Left ventricle myocardium superior (tissue), 1 donor: ENCODE measurements at regions of chr3 and their contacts with region 1.

Region 1: DNA sequence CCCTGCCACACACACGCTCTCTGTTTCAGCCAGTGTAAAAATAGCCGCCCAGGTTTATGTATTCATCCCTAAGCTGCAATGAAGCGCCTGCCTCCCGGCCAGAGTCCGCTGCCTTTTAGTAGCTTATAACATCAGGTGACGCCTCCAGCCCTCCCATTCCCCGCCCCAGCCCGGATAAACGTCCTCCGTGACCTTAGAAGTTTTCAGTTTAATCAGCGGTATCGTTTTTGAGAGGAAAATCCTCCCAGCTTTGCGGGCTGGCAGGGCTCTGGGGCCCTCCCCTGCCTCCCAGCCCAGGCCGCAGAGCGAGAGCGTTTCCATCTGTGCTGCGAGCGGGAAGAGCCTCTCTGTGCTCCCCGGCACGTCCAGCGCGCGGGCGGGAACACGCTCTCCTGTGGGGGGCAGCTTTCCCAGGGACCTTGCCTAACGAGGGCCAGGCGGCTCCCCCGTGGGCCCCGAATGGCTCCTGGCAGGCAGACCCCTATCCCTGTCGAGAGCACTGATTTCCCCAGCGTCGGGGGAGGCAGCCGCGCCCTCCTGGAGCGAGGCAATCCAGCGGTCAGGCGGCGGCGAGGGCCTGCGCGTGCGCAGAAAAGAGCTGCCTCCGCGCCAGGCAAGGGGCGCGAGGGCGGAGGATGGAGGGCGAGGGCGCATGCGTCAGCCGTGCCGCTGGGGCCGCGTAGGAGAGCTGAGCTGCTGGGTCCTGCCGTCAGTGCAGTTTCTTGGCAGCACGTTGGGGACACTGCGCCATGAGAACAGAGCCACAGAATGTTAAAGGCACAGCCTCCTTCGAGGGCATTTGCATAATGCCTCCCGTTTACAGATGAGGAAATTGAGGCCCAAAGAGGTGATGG is 71.1 kb downstream of the CCNL1 start:
- DNase-seq: peak; percentile 98
- ATAC-seq: peak; percentile 85

Region 2: DNA sequence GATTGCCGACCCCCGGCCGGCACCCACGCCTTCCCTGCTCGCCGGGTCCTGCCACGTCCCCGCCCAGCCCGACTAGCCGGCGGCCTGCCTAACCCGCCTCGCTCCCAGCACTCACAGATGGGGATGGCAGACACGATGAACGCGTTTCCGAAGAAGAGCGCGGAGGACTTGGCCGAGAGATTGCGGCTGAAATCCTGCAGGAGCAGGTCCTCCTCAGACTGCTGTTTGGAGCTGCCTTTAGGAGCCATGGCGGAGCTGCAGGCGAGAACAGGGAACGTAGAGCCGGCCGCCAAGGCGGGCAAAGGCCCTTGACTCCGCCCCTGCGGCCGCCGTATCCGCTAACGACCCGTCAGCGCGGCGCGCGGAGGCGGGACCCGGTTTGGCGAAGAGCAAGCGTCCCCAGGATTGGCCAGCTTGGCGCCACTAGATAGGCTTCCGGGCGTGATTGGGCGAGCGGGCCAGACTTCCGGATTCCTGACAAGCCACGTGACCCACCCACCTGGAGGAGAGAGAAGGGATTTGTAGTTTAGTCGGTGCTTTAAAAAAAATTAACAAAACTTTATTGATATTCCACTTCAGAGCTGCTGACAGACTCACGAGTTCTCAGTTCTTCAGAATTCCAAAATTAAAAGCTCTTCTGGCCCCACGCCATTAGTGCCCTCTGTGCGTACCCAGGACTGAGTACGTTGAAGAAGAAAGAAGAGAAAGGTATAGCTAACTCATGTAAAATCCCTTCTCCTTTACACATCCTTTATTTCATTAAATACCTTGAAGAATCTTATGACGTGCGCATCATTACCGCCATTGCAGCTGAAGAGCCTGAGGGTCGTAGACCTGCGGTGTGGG is 533.8 kb before region 1 on chr3 and contains the start of gene SSR3:
- intact Hi-C with region 1: loop called (anchors 5 kb)
- DNase-seq: peak; percentile 100
- ATAC-seq: peak; percentile 99
- total RNA-seq, gene SSR3: 223 TPM

Region 3: DNA sequence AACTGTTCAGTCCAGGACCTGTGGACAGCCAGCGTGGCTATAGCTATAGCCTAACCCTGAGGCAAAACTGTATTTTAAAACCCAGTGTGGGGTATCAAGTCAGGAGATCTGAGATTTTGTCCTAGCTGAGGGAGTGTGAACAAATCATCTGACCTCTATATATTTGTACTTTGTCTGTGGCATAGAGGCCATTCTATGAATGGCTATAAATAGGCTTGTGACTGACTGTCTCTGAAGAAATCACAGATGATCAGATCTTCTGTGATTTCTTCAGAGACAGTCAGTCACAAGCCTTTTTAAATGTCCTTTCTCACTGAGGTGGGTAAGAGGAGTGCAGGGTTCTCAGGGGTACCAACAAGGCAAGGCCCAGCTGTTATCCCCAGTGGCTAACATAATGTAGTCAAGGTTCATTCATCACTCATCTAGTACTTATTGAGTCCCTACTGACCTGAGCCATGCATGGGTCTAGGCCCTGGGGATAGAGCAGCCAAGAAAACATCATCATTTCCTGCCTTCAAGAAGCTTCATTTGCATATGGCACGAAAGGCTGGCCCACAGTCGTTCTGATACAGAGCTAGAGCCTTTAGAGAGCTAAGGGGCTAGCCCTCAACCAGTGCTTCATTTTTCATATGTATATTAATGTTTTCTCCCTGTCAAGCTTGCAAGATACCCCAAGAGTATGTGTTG is 361.2 kb before region 1 on chr3:
- intact Hi-C with region 1: no loop called
- DNase-seq: no peak
- ATAC-seq: peak; percentile 24

Region 4: GRCh38 chr3:157045238-157045850 is 43.5 kb before region 1 on chr3:
- intact Hi-C with region 1: no loop called
- DNase-seq: no peak
- ATAC-seq: peak; percentile 58

Region 5: GRCh38 chr3:157130467-157131251 is 41.8 kb after region 1 on chr3:
- intact Hi-C with region 1: loop called (anchors 5 kb)
- DNase-seq: peak; percentile 43
- ATAC-seq: peak; percentile 5

Region 6: GRCh38 chr3:157311633-157312375 is 223.0 kb after region 1 on chr3:
- intact Hi-C with region 1: no loop called
- DNase-seq: no peak
- ATAC-seq: peak; percentile 40

Region 7: GRCh38 chr3:157639756-157640426 is 551.1 kb after region 1 on chr3:
- intact Hi-C with region 1: no loop called
- DNase-seq: no peak
- ATAC-seq: no peak